T-cell (primary cell): ENCODE measurements at regions of chr11 and their contacts with region 1.

Region 1: GRCh38 chr11:9210922-9211320 is 54.2 kb downstream of the DENND5A start:
- DNase-seq: peak in 1 of 35 experiments; percentile 14
- ATAC-seq: peak in 1 of 4 experiments; percentile 35
- H3K4me3 ChIP-seq: no peak overlapping the region
- H3K4me3 Mint-ChIP-seq: no peak overlapping the region
- H3K27ac ChIP-seq: no peak overlapping the region
- H3K27ac Mint-ChIP-seq: peak overlapping the region; percentile 22 to 25
- H3K4me1 ChIP-seq: peaks cover 2 to 7% of the 10 kb centered on the region in 2 experiments
- H3K4me1 Mint-ChIP-seq: peaks cover 59 to 75% (median 74%) of the 10 kb centered on the region in 3 donors
- H3K27me3 ChIP-seq: no peaks in the 10 kb centered on the region
- H3K27me3 Mint-ChIP-seq: no peaks in the 10 kb centered on the region

Region 2: GRCh38 chr11:9120664-9121485 is 90.0 kb before region 1 on chr11:
- CTCF ChIA-PET with region 1: no interaction called
- POLR2A ChIA-PET with region 1: no interaction called
- DNase-seq: no peak
- ATAC-seq: no peak
- H3K4me3 ChIP-seq: no peak overlapping the region
- H3K4me3 Mint-ChIP-seq: no peak overlapping the region
- H3K27ac ChIP-seq: no peak overlapping the region
- H3K27ac Mint-ChIP-seq: no peak overlapping the region
- H3K4me1 ChIP-seq: no peaks in the 10 kb centered on the region
- H3K4me1 Mint-ChIP-seq: no peaks in the 10 kb centered on the region
- H3K27me3 ChIP-seq: no peaks in the 10 kb centered on the region
- H3K27me3 Mint-ChIP-seq: peaks cover 0 to 2% of the 10 kb centered on the region in 2 donors

Region 3: GRCh38 chr11:9170450-9170849 is 40.5 kb before region 1 on chr11:
- CTCF ChIA-PET with region 1: no interaction called
- POLR2A ChIA-PET with region 1: no interaction called
- DNase-seq: no peak
- ATAC-seq: no peak
- H3K4me3 ChIP-seq: no peak overlapping the region
- H3K4me3 Mint-ChIP-seq: no peak overlapping the region
- H3K27ac ChIP-seq: no peak overlapping the region
- H3K27ac Mint-ChIP-seq: no peak overlapping the region
- H3K4me1 ChIP-seq: no peaks in the 10 kb centered on the region
- H3K4me1 Mint-ChIP-seq: peaks cover 4 to 11% (median 6%) of the 10 kb centered on the region in 3 donors
- H3K27me3 ChIP-seq: no peaks in the 10 kb centered on the region
- H3K27me3 Mint-ChIP-seq: no peaks in the 10 kb centered on the region

Region 4: GRCh38 chr11:9280655-9281301 is 69.9 kb after region 1 on chr11:
- CTCF ChIA-PET with region 1: no interaction called
- POLR2A ChIA-PET with region 1: no interaction called
- DNase-seq: peak in 34 of 35 experiments; percentile 10 to 79 (median 46)
- ATAC-seq: peak; percentile 88 to 96 (median 94)
- H3K4me3 ChIP-seq: peak overlapping the region in 1 of 2 donors; percentile 32
- H3K4me3 Mint-ChIP-seq: peak overlapping the region; percentile 49 to 72 (median 53)
- H3K27ac ChIP-seq: peak overlapping the region; percentile 15
- H3K27ac Mint-ChIP-seq: peak overlapping the region; percentile 23 to 30
- H3K4me1 ChIP-seq: peaks cover 12 to 16% of the 10 kb centered on the region in 2 experiments
- H3K4me1 Mint-ChIP-seq: peaks cover 17 to 20% (median 20%) of the 10 kb centered on the region in 3 donors
- H3K27me3 ChIP-seq: no peaks in the 10 kb centered on the region
- H3K27me3 Mint-ChIP-seq: no peaks in the 10 kb centered on the region

Region 5: GRCh38 chr11:9629064-9629463 is 418.1 kb after region 1 on chr11:
- CTCF ChIA-PET with region 1: interaction called in 1 of 2 experiments, 11 read pairs
- POLR2A ChIA-PET with region 1: no interaction called
- DNase-seq: no peak
- ATAC-seq: no peak
- H3K4me3 ChIP-seq: no peak overlapping the region
- H3K4me3 Mint-ChIP-seq: no peak overlapping the region
- H3K27ac ChIP-seq: no peak overlapping the region
- H3K27ac Mint-ChIP-seq: no peak overlapping the region
- H3K4me1 ChIP-seq: no peaks in the 10 kb centered on the region
- H3K4me1 Mint-ChIP-seq: no peaks in the 10 kb centered on the region
- H3K27me3 ChIP-seq: peaks cover 0 to 4% of the 10 kb centered on the region in 2 experiments
- H3K27me3 Mint-ChIP-seq: peaks cover 0 to 4% of the 10 kb centered on the region in 2 donors